CD8-positive, alpha-beta T cell (primary cell): ENCODE measurements at regions of chr2 and their contacts with region 1.

Region 1: GRCh38 chr2:48377646-48378045 is 152.3 kb upstream of the STON1 start:
- DNase-seq: no peak
- ATAC-seq: no peak
- H3K4me3 ChIP-seq: no peak overlapping the region
- H3K4me3 Mint-ChIP-seq: no peak overlapping the region
- H3K27ac ChIP-seq: no peak overlapping the region
- H3K27ac Mint-ChIP-seq: no peak overlapping the region
- H3K4me1 ChIP-seq: no peaks in the 10 kb centered on the region
- H3K4me1 Mint-ChIP-seq: no peaks in the 10 kb centered on the region
- H3K27me3 ChIP-seq: no peaks in the 10 kb centered on the region
- H3K27me3 Mint-ChIP-seq: no peaks in the 10 kb centered on the region
- CTCF ChIP-seq: no peak

Region 2: DNA sequence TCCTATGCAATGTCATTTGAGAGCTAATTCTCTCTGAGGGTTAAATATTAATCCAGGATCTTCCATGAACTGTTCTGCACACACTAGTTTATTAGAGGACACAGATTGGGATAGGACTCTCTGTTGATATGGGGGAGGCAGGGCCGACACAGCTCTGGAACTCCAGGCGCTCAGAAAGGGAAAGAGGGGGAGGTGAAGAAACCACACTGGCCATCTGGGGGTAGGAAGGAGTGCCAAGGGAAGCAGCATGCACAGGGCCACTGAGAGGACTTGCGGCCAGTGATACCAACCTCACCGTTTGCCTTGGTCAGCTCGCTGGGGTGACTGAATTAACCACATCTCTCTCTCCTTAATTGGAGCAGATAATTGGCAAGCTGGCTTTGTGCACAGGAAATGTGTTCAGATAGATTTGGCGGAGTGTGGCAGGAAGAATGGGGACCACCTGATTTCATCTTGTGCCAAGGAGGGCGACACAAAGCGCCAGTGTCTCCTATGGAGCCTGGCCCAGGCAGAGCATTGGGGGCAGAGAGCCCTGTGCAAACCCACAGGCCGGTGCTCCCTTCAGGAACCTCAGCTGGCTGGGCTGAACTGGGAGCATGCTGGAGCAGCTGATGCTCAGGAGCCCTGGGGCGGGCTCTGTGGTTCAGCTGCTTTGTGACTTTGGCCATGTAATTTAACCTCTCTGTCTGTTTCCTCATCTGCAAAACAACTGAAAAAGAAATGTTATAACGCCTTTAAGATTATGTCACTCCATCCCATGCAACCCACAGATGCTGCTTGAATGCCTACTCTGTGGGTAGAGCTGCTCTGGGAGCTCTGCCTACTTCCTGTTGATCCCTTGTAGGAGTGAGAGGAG is 37.6 kb after region 1 on chr2:
- CTCF ChIA-PET with region 1: interaction called, 3 read pairs
- POLR2A ChIA-PET with region 1: no interaction called
- intact Hi-C with region 1: loop called in 1 of 2 experiments (anchors 5 kb)
- DNase-seq: peak in 1 of 9 experiments; percentile 26
- ATAC-seq: peak; percentile 45
- H3K4me3 ChIP-seq: peak overlapping the region in 1 of 2 experiments; percentile 23
- H3K4me3 Mint-ChIP-seq: peak overlapping the region; percentile 38
- H3K27ac ChIP-seq: no peak overlapping the region
- H3K27ac Mint-ChIP-seq: peak overlapping the region; percentile 16
- H3K4me1 ChIP-seq: peaks cover 28% of the 10 kb centered on the region
- H3K4me1 Mint-ChIP-seq: peaks cover 38% of the 10 kb centered on the region
- H3K27me3 ChIP-seq: no peaks in the 10 kb centered on the region
- H3K27me3 Mint-ChIP-seq: no peaks in the 10 kb centered on the region
- CTCF ChIP-seq: no peak

Region 3: GRCh38 chr2:48496849-48497248 is 119.2 kb after region 1 on chr2:
- CTCF ChIA-PET with region 1: no interaction called
- POLR2A ChIA-PET with region 1: no interaction called
- intact Hi-C with region 1: no loop called
- DNase-seq: no peak
- ATAC-seq: no peak
- H3K4me3 ChIP-seq: no peak overlapping the region
- H3K4me3 Mint-ChIP-seq: no peak overlapping the region
- H3K27ac ChIP-seq: no peak overlapping the region
- H3K27ac Mint-ChIP-seq: no peak overlapping the region
- H3K4me1 ChIP-seq: no peaks in the 10 kb centered on the region
- H3K4me1 Mint-ChIP-seq: no peaks in the 10 kb centered on the region
- H3K27me3 ChIP-seq: no peaks in the 10 kb centered on the region
- H3K27me3 Mint-ChIP-seq: no peaks in the 10 kb centered on the region
- CTCF ChIP-seq: no peak